ENCODE measurements at regions of chr15 and their contacts with region 1.

Region 1: GRCh38 chr15:98671060-98672008 is 23.0 kb downstream of the IGF1R start:
- H3K4me3 Mint-ChIP-seq: no peak overlapping the region
- H3K27ac Mint-ChIP-seq: no peak overlapping the region
- H3K4me1 Mint-ChIP-seq: peaks cover 39% of the 10 kb centered on the region
- H3K27me3 Mint-ChIP-seq: no peaks in the 10 kb centered on the region

Region 2: GRCh38 chr15:98734466-98735199 is 63.3 kb after region 1 on chr15:
- intact Hi-C with region 1: loop called (anchors 10 kb)
- H3K4me3 Mint-ChIP-seq: no peak overlapping the region
- H3K27ac Mint-ChIP-seq: peak overlapping the region; percentile 59
- H3K4me1 Mint-ChIP-seq: peaks cover 22% of the 10 kb centered on the region
- H3K27me3 Mint-ChIP-seq: no peaks in the 10 kb centered on the region